Left ventricle myocardium superior (tissue), 1 donor: ENCODE measurements at regions of chr1 and their contacts with region 1.

Region 1: DNA sequence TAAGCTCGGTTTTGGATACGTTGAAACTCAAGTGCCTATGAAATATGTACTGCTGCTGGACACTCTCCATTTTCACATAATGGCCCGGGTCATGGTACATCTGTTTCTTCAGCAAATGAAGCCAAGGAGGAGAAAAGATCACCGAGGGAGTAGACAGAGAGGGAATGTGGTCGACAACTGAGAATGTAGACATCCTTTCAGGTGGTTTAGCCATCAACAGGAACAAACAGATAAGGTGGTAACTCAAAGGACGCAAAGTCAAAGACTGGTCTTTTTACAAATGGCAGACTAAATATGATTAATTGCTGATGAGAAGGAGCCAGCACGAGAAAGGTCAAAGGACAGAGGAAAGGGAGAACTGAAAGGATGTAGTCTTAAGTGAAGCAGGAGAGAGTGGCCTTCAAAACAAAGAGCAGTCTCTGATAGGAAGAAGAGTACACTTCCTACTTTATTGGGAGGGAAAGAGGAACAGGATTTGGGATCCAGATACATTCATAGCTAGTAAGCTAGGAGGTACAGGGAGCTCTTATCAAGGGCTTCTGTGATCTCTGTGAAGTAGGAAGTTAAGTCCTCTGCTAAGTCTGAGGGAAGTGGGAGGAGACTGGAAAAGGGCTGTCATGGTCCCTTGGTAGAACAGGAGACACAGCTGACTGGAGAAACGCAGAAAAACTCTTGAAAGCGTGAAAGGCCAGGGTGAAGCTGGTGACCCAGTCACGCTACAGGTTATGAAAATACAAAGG is 28.3 kb downstream of the NUP133 start:
- DNase-seq: no peak
- ATAC-seq: no peak

Region 2: GRCh38 chr1:229258031-229258756 is 221.6 kb before region 1 on chr1:
- intact Hi-C with region 1: loop called (anchors 5 kb)
- DNase-seq: peak; percentile 37
- ATAC-seq: peak; percentile 85